IMR-90 (cell line): ENCODE measurements at regions of chr1 and their contacts with region 1.

Region 1: GRCh38 chr1:37905727-37906126 is 41.1 kb downstream of the INPP5B start:
- DNase-seq: no peak
- ATAC-seq: no peak
- H3K4me3 ChIP-seq: no peak overlapping the region
- H3K27ac ChIP-seq: no peak overlapping the region
- H3K4me1 ChIP-seq: no peaks in the 10 kb centered on the region
- H3K27me3 ChIP-seq: no peaks in the 10 kb centered on the region
- CTCF ChIP-seq: no peak
- POLR2A ChIP-seq: no peak
- RAD21 ChIP-seq: no peak

Region 2: DNA sequence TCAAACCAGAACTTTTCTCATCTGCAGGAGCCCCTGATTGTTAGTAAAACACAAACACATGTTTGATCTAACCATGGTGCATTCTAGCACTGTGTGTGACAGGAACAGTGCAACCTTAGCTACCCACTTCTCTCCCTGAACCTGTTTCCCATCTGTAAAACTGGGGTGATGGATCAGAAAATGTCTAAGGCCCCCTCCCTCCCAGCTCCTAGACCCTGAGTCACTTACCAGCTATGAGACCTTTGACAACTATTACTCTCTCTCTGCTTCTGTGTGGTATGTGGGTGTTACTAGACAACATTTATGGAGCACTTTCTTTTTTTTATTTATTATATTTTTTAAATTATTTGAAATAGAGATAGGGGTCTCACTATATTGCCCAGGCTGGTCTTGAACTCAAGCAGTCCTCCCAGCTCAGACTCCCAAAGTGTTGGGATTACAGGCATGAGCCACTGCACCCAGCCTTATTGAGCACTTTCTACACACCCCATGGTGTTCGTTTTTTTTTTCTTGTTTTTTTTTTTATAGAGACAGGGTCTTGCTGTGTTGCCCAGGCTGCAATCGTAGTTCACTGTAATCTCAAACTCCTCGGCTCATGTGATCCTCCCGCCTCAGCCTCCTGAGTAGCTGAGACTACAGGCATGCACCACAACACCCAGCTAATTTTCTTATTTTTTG is 38.5 kb after region 1 on chr1:
- CTCF ChIA-PET with region 1: no interaction called
- POLR2A ChIA-PET with region 1: interaction called, 11 read pairs
- dilution Hi-C with region 1: no loop called
- in situ Hi-C with region 1: no loop called
- intact Hi-C with region 1: no loop called
- DNase-seq: peak; percentile 59
- ATAC-seq: no peak
- H3K4me3 ChIP-seq: no peak overlapping the region
- H3K27ac ChIP-seq: no peak overlapping the region
- H3K4me1 ChIP-seq: peaks cover 8% of the 10 kb centered on the region
- H3K27me3 ChIP-seq: no peaks in the 10 kb centered on the region
- CTCF ChIP-seq: no peak
- POLR2A ChIP-seq: no peak
- RAD21 ChIP-seq: no peak

Region 3: DNA sequence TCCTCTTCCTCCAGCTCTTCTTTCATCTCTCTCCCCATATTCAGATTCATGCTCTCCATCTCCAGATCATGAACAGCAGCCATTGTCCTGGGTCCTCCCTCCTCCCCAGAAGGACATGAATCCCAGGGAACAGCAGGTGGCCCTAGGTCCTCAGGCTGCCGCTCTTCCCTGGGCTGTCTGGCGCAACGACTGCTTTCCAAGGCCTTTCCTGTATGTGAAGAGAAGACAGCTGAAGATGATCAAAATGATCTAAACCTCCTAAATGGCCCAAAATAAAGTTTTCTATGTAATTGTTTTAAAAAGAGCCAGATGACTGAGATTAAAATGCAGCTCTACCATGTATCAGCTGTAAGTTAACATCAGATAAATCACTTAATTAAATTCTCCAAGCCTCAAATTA is 1013.4 kb after region 1 on chr1:
- CTCF ChIA-PET with region 1: no interaction called
- POLR2A ChIA-PET with region 1: no interaction called
- dilution Hi-C with region 1: no loop called
- in situ Hi-C with region 1: no loop called
- intact Hi-C with region 1: no loop called
- DNase-seq: no peak
- ATAC-seq: no peak
- H3K4me3 ChIP-seq: no peak overlapping the region
- H3K27ac ChIP-seq: no peak overlapping the region
- H3K4me1 ChIP-seq: no peaks in the 10 kb centered on the region
- H3K27me3 ChIP-seq: no peaks in the 10 kb centered on the region
- CTCF ChIP-seq: no peak
- POLR2A ChIP-seq: no peak
- RAD21 ChIP-seq: no peak